Caco-2 (cell line): ENCODE measurements at regions of chr10 and their contacts with region 1.

Region 1: DNA sequence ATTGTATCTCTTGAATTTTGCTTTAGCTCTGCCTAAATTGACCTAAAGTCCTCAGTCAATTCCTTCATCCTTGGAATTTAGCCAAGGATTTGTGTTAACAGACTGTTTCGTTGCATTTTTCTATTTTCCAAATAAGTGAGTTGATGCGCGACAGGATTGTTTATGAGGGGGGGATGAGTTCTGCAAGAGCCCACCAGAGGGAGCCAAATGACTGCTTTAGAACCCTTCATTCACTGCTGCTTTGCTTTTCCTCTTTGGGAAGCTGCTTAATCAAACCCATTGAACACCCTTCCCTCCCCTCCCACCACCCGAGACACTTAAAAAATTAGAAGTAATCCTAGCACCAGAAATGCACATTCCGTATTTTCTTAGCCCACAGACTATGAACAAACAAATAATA is 33.7 kb upstream of the PTF1A start:
- DNase-seq: peak; percentile 61 to 67
- H3K4me3 ChIP-seq: no peak overlapping the region
- H3K4me3 Mint-ChIP-seq: no peak overlapping the region
- H3K27ac Mint-ChIP-seq: no peak overlapping the region
- H3K4me1 ChIP-seq: 0 out of 2 replicates have a peak, but pooled peaks cover 4% of the 10 kb centered on the region
- H3K4me1 Mint-ChIP-seq: no peaks in the 10 kb centered on the region
- H3K27me3 ChIP-seq: no peaks in the 10 kb centered on the region
- H3K27me3 Mint-ChIP-seq: peaks cover 21% of the 10 kb centered on the region
- CTCF ChIP-seq: peak; percentile 95 to 96

Region 2: GRCh38 chr10:23293145-23293724 is 134.9 kb after region 1 on chr10:
- CTCF ChIA-PET with region 1: interaction called, 54 read pairs
- POLR2A ChIA-PET with region 1: no interaction called
- intact Hi-C with region 1: loop called (anchors 1 kb)
- DNase-seq: peak; percentile 58 to 72
- H3K4me3 ChIP-seq: no peak overlapping the region
- H3K4me3 Mint-ChIP-seq: no peak overlapping the region
- H3K27ac Mint-ChIP-seq: no peak overlapping the region
- H3K4me1 ChIP-seq: no peaks in the 10 kb centered on the region
- H3K4me1 Mint-ChIP-seq: no peaks in the 10 kb centered on the region
- H3K27me3 ChIP-seq: no peaks in the 10 kb centered on the region
- H3K27me3 Mint-ChIP-seq: peaks cover 8% of the 10 kb centered on the region
- CTCF ChIP-seq: peak; percentile 63 to 84

Region 3: DNA sequence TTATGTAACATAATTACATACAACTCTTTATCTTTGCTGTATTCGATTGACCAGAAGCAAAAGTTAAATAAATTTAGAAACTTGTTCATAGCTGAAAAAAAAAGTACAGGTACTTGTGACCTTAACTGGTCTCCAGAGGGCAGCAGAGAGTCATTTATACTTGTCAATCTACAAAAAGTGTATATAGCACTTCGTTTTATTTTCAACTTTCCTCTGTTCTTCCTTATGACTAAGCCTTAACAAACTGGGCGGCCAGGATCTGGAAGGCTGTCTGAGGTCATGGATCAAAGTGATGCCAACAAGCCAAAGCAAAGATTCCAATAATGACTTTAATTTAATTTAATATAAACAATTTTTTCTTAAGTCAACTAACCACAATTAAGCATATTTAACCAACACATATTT is 156.5 kb after region 1 on chr10:
- CTCF ChIA-PET with region 1: interaction called, 13 read pairs
- POLR2A ChIA-PET with region 1: no interaction called
- intact Hi-C with region 1: no loop called
- DNase-seq: peak in 1 of 2 experiments; percentile 70
- H3K4me3 ChIP-seq: no peak overlapping the region
- H3K4me3 Mint-ChIP-seq: no peak overlapping the region
- H3K27ac Mint-ChIP-seq: no peak overlapping the region
- H3K4me1 ChIP-seq: no peaks in the 10 kb centered on the region
- H3K4me1 Mint-ChIP-seq: no peaks in the 10 kb centered on the region
- H3K27me3 ChIP-seq: no peaks in the 10 kb centered on the region
- H3K27me3 Mint-ChIP-seq: peaks cover 5% of the 10 kb centered on the region
- CTCF ChIP-seq: peak; percentile 81 to 82

Region 4: GRCh38 chr10:23525406-23525805 is 367.0 kb after region 1 on chr10:
- CTCF ChIA-PET with region 1: interaction called, 3 read pairs
- POLR2A ChIA-PET with region 1: no interaction called
- intact Hi-C with region 1: loop called (anchors 2 kb)
- DNase-seq: no peak
- H3K4me3 ChIP-seq: no peak overlapping the region
- H3K4me3 Mint-ChIP-seq: no peak overlapping the region
- H3K27ac Mint-ChIP-seq: no peak overlapping the region
- H3K4me1 ChIP-seq: no peaks in the 10 kb centered on the region
- H3K4me1 Mint-ChIP-seq: no peaks in the 10 kb centered on the region
- H3K27me3 ChIP-seq: no peaks in the 10 kb centered on the region
- H3K27me3 Mint-ChIP-seq: peaks cover 8% of the 10 kb centered on the region
- CTCF ChIP-seq: no peak

Region 5: GRCh38 chr10:23614483-23614882 is 456.1 kb after region 1 on chr10:
- CTCF ChIA-PET with region 1: no interaction called
- POLR2A ChIA-PET with region 1: no interaction called
- intact Hi-C with region 1: no loop called
- DNase-seq: no peak
- H3K4me3 ChIP-seq: no peak overlapping the region
- H3K4me3 Mint-ChIP-seq: no peak overlapping the region
- H3K27ac Mint-ChIP-seq: no peak overlapping the region
- H3K4me1 ChIP-seq: no peaks in the 10 kb centered on the region
- H3K4me1 Mint-ChIP-seq: no peaks in the 10 kb centered on the region
- H3K27me3 ChIP-seq: no peaks in the 10 kb centered on the region
- H3K27me3 Mint-ChIP-seq: peaks cover 4% of the 10 kb centered on the region
- CTCF ChIP-seq: no peak

Region 6: GRCh38 chr10:23656735-23657134 is 498.4 kb after region 1 on chr10:
- CTCF ChIA-PET with region 1: no interaction called
- POLR2A ChIA-PET with region 1: no interaction called
- intact Hi-C with region 1: loop called (anchors 2 kb)
- DNase-seq: peak in 1 of 2 experiments; percentile 25
- H3K4me3 ChIP-seq: no peak overlapping the region
- H3K4me3 Mint-ChIP-seq: no peak overlapping the region
- H3K27ac Mint-ChIP-seq: no peak overlapping the region
- H3K4me1 ChIP-seq: no peaks in the 10 kb centered on the region
- H3K4me1 Mint-ChIP-seq: no peaks in the 10 kb centered on the region
- H3K27me3 ChIP-seq: no peaks in the 10 kb centered on the region; the same call in 1 of the 2 replicates
- H3K27me3 Mint-ChIP-seq: peaks cover 9% of the 10 kb centered on the region
- CTCF ChIP-seq: peak; percentile 72 to 74

Region 7: GRCh38 chr10:23702977-23703414 is 544.6 kb after region 1 on chr10:
- CTCF ChIA-PET with region 1: no interaction called
- POLR2A ChIA-PET with region 1: no interaction called
- intact Hi-C with region 1: loop called (anchors 2 kb)
- DNase-seq: peak; percentile 78
- H3K4me3 ChIP-seq: no peak overlapping the region
- H3K4me3 Mint-ChIP-seq: no peak overlapping the region
- H3K27ac Mint-ChIP-seq: no peak overlapping the region
- H3K4me1 ChIP-seq: no peaks in the 10 kb centered on the region
- H3K4me1 Mint-ChIP-seq: no peaks in the 10 kb centered on the region
- H3K27me3 ChIP-seq: no peaks in the 10 kb centered on the region
- H3K27me3 Mint-ChIP-seq: peaks cover 15% of the 10 kb centered on the region
- CTCF ChIP-seq: peak; percentile 92 to 95